Vagina (tissue), 2 donors: ENCODE measurements at regions of chr17 and their contacts with region 1.

Region 1: DNA sequence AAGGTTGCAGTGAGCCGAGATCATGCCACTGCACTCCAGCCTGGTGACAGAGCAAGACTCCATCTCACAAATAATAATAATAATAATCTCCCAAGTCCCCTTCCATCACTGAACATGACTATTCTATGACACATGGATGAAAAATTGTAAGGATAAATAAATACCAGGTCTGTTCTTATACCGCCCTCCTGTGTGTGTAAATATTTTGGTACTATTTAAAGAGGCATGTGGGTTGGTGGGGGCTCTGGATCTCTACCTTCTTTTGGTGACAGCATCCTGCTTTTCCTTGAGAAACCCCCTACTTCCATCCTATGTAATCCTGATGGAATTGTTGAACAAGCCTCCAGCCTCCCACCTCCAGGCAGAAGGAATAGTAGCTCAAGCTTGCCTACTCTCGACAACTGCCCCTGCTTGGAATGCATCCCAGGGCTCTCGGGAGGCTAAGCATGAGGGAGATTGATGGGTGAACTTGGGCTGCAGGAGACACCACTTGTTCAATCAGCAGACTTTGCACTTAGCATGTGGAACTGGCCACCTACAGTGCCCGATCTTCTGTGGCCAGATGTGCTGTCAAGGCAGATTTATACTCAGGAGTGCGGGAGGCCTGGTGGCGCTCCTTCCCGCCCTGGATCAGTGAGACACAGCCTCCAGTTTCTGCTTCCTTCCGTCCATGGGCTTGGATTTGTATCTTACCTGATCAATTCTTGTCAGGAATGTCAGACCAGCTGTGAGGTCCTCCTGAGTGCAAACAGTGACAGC is 287.4 kb downstream of the SLC39A11 start:
- DNase-seq: no peak
- H3K4me3 ChIP-seq: no peak overlapping the region
- H3K27ac ChIP-seq: no peak overlapping the region
- H3K4me1 ChIP-seq: no peaks in the 10 kb centered on the region
- H3K27me3 ChIP-seq: no peaks in the 10 kb centered on the region
- CTCF ChIP-seq: no peak
- POLR2A ChIP-seq: no peak

Region 2: DNA sequence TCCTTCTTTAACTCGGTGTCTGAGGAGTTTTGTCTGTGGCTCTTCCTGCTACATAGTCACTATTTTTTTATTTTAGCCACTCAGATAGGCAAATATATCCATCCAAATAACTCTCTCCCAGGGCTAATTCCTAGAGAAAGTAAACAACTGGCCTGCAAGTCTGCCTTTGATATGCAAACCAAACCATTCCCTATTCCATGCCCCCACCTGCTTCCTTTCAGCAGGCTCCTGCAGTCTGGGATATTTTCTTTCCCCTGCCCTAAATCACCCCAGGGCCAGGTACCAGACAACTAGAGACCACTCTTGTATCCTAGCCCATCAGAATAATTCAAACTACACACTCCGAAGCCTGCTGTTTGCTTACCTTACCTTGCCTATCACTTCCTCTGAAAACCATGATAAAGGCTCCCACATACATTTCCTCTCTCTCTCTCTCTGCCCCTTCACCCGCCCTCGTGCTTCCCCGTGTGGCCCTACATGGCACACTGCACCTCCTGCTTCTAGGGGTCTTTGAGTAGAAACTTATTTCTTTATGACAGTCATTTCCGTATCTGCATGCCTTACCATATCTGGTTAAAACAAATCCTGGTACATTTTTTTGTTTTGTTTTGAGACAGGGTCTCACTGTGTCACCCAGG is 1753.9 kb after region 1 on chr17:
- intact Hi-C with region 1: loop called (anchors 5 kb)
- DNase-seq: no peak
- H3K4me3 ChIP-seq: no peak overlapping the region
- H3K27ac ChIP-seq: no peak overlapping the region
- H3K4me1 ChIP-seq: no peaks in the 10 kb centered on the region
- H3K27me3 ChIP-seq: no peaks in the 10 kb centered on the region
- CTCF ChIP-seq: no peak
- POLR2A ChIP-seq: no peak